ENCODE measurements at regions of chr9 and their contacts with region 1.

Region 1: GRCh38 chr9:112361601-112362000 is 18.3 kb upstream of the HSDL2 start:
- DNase-seq: no peak
- ATAC-seq: no peak
- H3K4me3 Mint-ChIP-seq: no peak overlapping the region
- H3K27ac Mint-ChIP-seq: no peak overlapping the region
- H3K4me1 Mint-ChIP-seq: peaks cover 11% of the 10 kb centered on the region
- H3K27me3 Mint-ChIP-seq: peaks cover 6% of the 10 kb centered on the region

Region 2: GRCh38 chr9:111691672-111692329 is 669.8 kb before region 1 on chr9:
- CTCF ChIA-PET with region 1: no interaction called
- POLR2A ChIA-PET with region 1: no interaction called
- intact Hi-C with region 1: no loop called
- DNase-seq: no peak
- ATAC-seq: no peak
- H3K4me3 Mint-ChIP-seq: no peak overlapping the region
- H3K27ac Mint-ChIP-seq: no peak overlapping the region
- H3K4me1 Mint-ChIP-seq: peaks cover 2% of the 10 kb centered on the region
- H3K27me3 Mint-ChIP-seq: no peaks in the 10 kb centered on the region

Region 3: GRCh38 chr9:112086627-112087026 is 275.0 kb before region 1 on chr9:
- CTCF ChIA-PET with region 1: interaction called, 25 read pairs
- POLR2A ChIA-PET with region 1: no interaction called
- intact Hi-C with region 1: loop called in 1 of 2 experiments (anchors 2 kb)
- DNase-seq: no peak
- ATAC-seq: no peak
- H3K4me3 Mint-ChIP-seq: no peak overlapping the region
- H3K27ac Mint-ChIP-seq: no peak overlapping the region
- H3K4me1 Mint-ChIP-seq: no peaks in the 10 kb centered on the region
- H3K27me3 Mint-ChIP-seq: no peaks in the 10 kb centered on the region

Region 4: GRCh38 chr9:112112941-112113681 is 248.5 kb before region 1 on chr9:
- CTCF ChIA-PET with region 1: interaction called, 26 read pairs
- POLR2A ChIA-PET with region 1: no interaction called
- intact Hi-C with region 1: loop called (anchors 1 kb)
- DNase-seq: peak; percentile 31
- ATAC-seq: peak; percentile 47
- H3K4me3 Mint-ChIP-seq: no peak overlapping the region
- H3K27ac Mint-ChIP-seq: no peak overlapping the region
- H3K4me1 Mint-ChIP-seq: no peaks in the 10 kb centered on the region
- H3K27me3 Mint-ChIP-seq: no peaks in the 10 kb centered on the region

Region 5: DNA sequence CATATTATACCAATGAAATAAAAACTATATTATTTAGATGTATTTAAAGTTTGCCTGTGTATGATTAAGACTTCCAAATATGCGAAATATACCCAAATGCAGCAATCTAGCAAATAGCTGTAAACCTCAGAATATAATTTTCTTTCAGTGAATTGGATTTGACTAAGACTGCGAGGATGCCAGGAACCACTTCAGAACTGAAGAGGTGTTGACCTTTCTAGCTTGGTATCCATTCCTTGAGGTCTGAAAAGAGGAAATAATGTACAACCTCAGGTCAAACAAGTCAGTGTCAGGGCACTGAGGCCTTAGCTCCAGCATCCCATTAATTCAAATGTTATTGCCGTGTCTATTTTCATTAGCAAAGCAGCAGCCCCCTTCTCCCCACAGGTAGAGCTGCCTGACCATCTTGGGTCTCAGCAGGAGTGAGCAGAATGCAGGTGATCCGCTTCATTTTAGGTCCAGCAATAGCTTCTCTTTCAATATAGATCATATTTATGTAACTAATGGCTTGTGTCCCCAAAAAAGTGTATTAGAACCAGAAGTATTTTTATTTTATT is 225.1 kb after region 1 on chr9:
- CTCF ChIA-PET with region 1: no interaction called
- POLR2A ChIA-PET with region 1: no interaction called
- intact Hi-C with region 1: no loop called
- DNase-seq: no peak
- ATAC-seq: no peak
- H3K4me3 Mint-ChIP-seq: no peak overlapping the region
- H3K27ac Mint-ChIP-seq: no peak overlapping the region
- H3K4me1 Mint-ChIP-seq: no peaks in the 10 kb centered on the region
- H3K27me3 Mint-ChIP-seq: no peaks in the 10 kb centered on the region

Region 6: GRCh38 chr9:112728401-112728800 is 366.8 kb after region 1 on chr9:
- CTCF ChIA-PET with region 1: no interaction called
- POLR2A ChIA-PET with region 1: no interaction called
- intact Hi-C with region 1: no loop called
- DNase-seq: no peak
- ATAC-seq: no peak
- H3K4me3 Mint-ChIP-seq: no peak overlapping the region
- H3K27ac Mint-ChIP-seq: no peak overlapping the region
- H3K4me1 Mint-ChIP-seq: no peaks in the 10 kb centered on the region
- H3K27me3 Mint-ChIP-seq: no peaks in the 10 kb centered on the region